ENCODE measurements at regions of chr1 and their contacts with region 1.

Region 1: DNA sequence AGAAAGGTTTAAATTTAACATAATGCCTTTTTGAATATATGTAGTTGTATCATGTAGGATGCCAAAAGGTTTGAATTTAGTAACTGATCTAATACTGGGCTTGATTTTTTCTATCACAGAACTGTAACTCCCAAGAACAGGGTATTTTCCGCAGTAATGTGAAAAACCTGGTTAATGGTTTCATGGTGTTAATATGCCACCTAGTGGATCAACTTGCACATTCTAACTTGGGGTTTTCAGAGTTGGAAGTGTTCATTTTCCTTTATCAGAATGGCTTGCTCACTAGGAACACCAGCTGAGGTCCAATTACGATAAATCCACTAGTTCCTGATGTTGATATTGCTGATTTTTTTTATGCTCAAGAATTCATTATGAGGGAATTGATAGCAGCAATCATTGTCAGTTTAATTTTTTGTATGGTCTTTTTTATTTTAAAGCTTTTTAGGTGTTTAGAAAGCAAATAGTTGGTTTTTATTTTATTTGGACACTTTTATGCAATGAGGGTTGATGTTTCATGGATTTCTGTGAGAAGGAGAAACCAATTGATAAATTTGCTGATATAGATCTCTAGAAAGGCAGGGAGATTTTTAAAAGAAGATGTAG is 157.2 kb downstream of the PLA2G4A start:
- DNase-seq: peak; percentile 16
- H3K4me3 ChIP-seq: no peak overlapping the region
- H3K27ac ChIP-seq: no peak overlapping the region
- H3K4me1 ChIP-seq: no peaks in the 10 kb centered on the region
- H3K27me3 ChIP-seq: no peaks in the 10 kb centered on the region
- CTCF ChIP-seq: peak; percentile 27 to 81 (median 73)
- POLR2A ChIP-seq: no peak

Region 2: GRCh38 chr1:186404454-186405051 is 581.4 kb before region 1 on chr1:
- intact Hi-C with region 1: loop called (anchors 10 kb)
- DNase-seq: no peak
- H3K4me3 ChIP-seq: no peak overlapping the region
- H3K27ac ChIP-seq: no peak overlapping the region
- H3K4me1 ChIP-seq: no peaks in the 10 kb centered on the region
- H3K27me3 ChIP-seq: no peaks in the 10 kb centered on the region
- CTCF ChIP-seq: peak; percentile 33 to 79 (median 70)
- POLR2A ChIP-seq: no peak

Region 3: DNA sequence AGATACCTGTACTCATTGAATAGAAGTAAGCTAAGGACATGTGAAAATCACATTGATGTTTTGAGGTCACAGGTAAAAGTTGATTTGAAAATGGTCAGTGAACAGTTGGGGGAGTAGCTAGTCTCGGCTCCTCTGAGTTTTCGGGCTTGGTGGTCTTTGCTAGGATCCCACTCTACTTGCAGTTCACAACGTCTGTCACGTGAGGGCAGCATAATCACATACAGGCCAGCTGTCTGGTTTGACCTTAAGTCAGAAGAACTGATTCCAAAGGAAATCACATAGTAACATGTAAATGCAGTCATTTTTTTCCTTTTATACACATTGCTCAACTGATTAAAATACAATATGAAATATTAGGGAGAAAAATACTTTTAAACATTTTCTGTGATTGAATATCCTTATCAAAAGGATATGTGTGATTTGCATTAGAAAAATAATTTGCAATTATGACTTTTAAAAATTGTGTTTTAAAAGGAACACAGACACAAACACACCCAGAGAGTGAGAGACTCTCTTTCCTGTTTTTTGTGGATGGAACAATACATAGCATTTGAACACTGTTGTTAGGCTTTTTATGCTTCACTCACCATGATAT is 503.2 kb before region 1 on chr1:
- intact Hi-C with region 1: loop called (anchors 2 kb)
- DNase-seq: peak; percentile 33
- H3K4me3 ChIP-seq: no peak overlapping the region
- H3K27ac ChIP-seq: no peak overlapping the region
- H3K4me1 ChIP-seq: no peaks in the 10 kb centered on the region
- H3K27me3 ChIP-seq: no peaks in the 10 kb centered on the region
- CTCF ChIP-seq: peak; percentile 44 to 86 (median 64)
- POLR2A ChIP-seq: no peak

Region 4: GRCh38 chr1:186605762-186606350 is 380.1 kb before region 1 on chr1:
- intact Hi-C with region 1: loop called (anchors 5 kb)
- DNase-seq: no peak
- H3K4me3 ChIP-seq: no peak overlapping the region
- H3K27ac ChIP-seq: no peak overlapping the region
- H3K4me1 ChIP-seq: no peaks in the 10 kb centered on the region
- H3K27me3 ChIP-seq: no peaks in the 10 kb centered on the region
- CTCF ChIP-seq: peak in 2 of 4 experiments; percentile 50 to 55
- POLR2A ChIP-seq: no peak

Region 5: GRCh38 chr1:186680245-186681061 is 305.5 kb before region 1 on chr1 and contains the start of gene PTGS2:
- intact Hi-C with region 1: loop called (anchors 10 kb)
- DNase-seq: peak; percentile 74
- H3K4me3 ChIP-seq: peak within 1 kb of the TSS; percentile 46 to 52
- H3K27ac ChIP-seq: peak within 1 kb of the TSS; percentile 81 to 92
- H3K4me1 ChIP-seq: no peaks in the 10 kb centered on the region
- H3K27me3 ChIP-seq: no peaks in the 10 kb centered on the region
- CTCF ChIP-seq: peak in 3 of 4 experiments; percentile 35 to 68 (median 64)
- POLR2A ChIP-seq: peak; percentile 86
- total RNA-seq, gene PTGS2: 11.2 to 14.3 TPM

Region 6: DNA sequence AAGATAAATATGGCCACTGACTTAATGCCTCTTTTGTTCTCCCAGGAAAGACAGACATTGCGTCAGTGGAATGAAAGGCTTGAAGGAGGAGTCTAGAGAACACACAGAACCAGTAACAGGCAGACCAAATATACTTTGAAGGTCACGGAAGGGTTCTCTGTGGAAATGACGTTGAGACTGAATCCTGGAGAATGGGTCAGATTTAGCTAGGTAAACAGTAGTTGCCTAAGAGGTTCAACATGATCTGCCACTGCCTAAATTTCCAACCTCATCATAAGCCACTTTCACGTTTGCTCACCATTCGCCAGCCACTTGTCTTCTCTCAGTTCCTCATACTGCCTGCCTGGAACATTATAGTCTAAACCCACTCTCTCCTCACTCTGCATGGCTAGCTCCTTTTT is 136.7 kb before region 1 on chr1:
- intact Hi-C with region 1: no loop called
- DNase-seq: no peak
- H3K4me3 ChIP-seq: no peak overlapping the region
- H3K27ac ChIP-seq: no peak overlapping the region
- H3K4me1 ChIP-seq: no peaks in the 10 kb centered on the region
- H3K27me3 ChIP-seq: no peaks in the 10 kb centered on the region
- CTCF ChIP-seq: no peak
- POLR2A ChIP-seq: no peak

Measured in prostate gland (tissue), 2 donors.